Breast epithelium (tissue), 4 donors: ENCODE measurements at regions of chr20 and their contacts with region 1.

Region 1: DNA sequence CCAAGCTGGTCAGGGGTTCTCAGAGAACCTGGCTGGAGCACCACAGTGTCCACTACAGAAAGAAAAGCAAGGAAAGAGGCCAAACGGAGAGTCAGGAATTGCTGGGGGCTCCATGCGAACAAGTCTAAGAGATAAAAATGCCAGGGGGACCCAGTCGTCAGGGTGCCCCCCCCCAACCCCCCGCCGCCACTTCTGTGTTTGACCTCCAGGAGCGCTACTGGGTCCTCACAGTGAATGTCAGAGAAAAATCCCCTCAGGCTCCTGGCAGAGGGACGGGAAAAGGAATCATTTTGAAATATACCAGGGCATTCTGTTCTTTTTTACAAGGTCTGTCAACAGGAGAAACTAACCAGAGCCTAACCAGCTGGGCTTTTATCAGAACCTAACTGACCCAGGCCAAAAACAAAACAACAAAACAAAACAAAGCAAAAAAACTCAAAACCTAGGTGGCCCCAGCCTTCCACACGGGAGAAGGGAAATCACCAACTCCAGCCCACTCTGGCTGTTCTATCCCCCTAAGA is 17.9 kb upstream of the NELFCD start:
- DNase-seq: no peak
- H3K4me3 ChIP-seq: no peak overlapping the region
- H3K27ac ChIP-seq: no peak overlapping the region
- H3K4me1 ChIP-seq: no peaks in the 10 kb centered on the region
- H3K27me3 ChIP-seq: no peaks in the 10 kb centered on the region
- CTCF ChIP-seq: no peak
- POLR2A ChIP-seq: no peak

Region 2: DNA sequence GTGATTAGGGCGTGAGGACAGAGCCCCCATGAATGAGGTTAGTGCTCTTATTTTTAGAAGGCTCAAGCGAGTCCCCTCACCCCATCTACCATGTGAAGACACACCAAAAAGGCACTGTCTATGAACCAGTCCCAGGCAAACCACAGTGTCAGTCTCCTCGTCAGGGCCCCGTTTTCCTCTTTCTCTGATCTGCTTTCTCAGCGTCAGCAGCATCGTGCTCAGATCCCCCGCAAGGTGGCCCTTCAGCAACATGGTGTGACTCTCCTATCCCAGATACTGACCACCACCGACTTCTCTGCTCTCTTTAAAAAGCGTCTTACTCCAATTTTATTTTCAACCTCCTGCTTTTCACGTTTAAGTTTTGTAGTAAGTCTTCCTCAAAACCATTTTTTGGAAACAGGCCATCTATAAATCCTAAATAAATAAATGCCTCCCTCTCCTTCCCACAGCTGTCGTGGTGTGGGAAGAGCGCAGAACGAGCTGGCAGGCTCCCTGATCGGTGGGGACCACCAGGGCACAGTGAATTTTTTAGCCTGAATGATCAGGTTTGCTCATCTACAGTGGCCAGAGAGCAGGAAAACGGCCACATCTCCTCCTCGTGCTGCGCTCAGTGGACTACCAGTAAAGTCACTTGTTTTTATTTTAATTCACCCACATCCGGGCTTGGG is 1809.8 kb before region 1 on chr20:
- intact Hi-C with region 1: loop called (anchors 5 kb)
- DNase-seq: no peak
- H3K4me3 ChIP-seq: no peak overlapping the region
- H3K27ac ChIP-seq: no peak overlapping the region
- H3K4me1 ChIP-seq: no peaks in the 10 kb centered on the region
- H3K27me3 ChIP-seq: no peaks in the 10 kb centered on the region
- CTCF ChIP-seq: no peak
- POLR2A ChIP-seq: no peak